B cell (primary cell): ENCODE measurements at regions of chr19 and their contacts with region 1.

Region 1: GRCh38 chr19:13748169-13748828 is 16.0 kb upstream of the MRI1 start:
- DNase-seq: no peak
- ATAC-seq: no peak
- H3K4me3 ChIP-seq: peak overlapping the region; percentile 76 to 97 (median 86)
- H3K4me3 Mint-ChIP-seq: peak overlapping the region; percentile 90
- H3K27ac ChIP-seq: peak overlapping the region; percentile 71 to 94
- H3K27ac Mint-ChIP-seq: peak overlapping the region; percentile 82
- H3K4me1 ChIP-seq: peaks cover 11 to 15% of the 10 kb centered on the region in 2 donors
- H3K4me1 Mint-ChIP-seq: peaks cover 28% of the 10 kb centered on the region
- H3K27me3 ChIP-seq: no peaks in the 10 kb centered on the region
- H3K27me3 Mint-ChIP-seq: no peaks in the 10 kb centered on the region
- CTCF ChIP-seq: no peak

Region 2: DNA sequence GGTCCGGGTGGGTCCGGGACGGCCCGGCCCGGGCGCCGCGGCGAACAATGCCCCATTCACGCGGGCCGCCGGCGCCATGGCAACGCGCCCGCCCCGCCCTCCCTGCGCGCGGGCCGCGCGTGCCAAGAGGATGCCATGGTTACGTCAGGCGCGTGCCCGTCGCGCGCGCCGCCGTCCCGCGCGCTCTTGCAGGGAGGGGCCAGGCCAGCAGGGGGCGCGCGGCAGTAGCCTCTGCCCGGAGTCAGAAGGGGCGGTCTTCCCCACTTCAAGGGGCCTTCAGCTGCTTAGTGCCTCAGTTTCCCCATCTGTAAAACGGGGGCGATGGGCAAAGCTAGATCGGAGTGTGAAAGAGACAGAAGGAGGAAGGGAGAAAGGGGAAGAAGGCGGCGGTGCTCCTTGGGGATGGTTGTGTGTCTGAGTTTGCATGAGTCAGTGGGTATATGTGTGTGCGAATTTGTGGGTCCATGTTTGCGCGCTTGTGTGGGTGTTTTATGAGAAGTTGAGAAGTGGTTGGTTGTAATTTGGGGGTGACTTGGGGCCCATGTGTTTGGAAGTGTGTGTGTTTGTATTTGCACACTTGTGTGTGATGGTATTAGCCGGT is 764.7 kb before region 1 on chr19:
- CTCF ChIA-PET with region 1: no interaction called
- POLR2A ChIA-PET with region 1: no interaction called
- intact Hi-C with region 1: loop called (anchors 5 kb)
- DNase-seq: peak; percentile 93
- ATAC-seq: peak; percentile 77
- H3K4me3 ChIP-seq: peak overlapping the region in 4 of 5 experiments; percentile 24 to 62 (median 36)
- H3K4me3 Mint-ChIP-seq: no peak overlapping the region
- H3K27ac ChIP-seq: no peak overlapping the region
- H3K27ac Mint-ChIP-seq: no peak overlapping the region
- H3K4me1 ChIP-seq: peaks cover 30 to 43% of the 10 kb centered on the region in 2 donors
- H3K4me1 Mint-ChIP-seq: peaks cover 15% of the 10 kb centered on the region
- H3K27me3 ChIP-seq: peaks cover 0 to 10% (median 2%) of the 10 kb centered on the region in 4 experiments
- H3K27me3 Mint-ChIP-seq: peaks cover 4% of the 10 kb centered on the region
- CTCF ChIP-seq: peak; percentile 91

Region 3: DNA sequence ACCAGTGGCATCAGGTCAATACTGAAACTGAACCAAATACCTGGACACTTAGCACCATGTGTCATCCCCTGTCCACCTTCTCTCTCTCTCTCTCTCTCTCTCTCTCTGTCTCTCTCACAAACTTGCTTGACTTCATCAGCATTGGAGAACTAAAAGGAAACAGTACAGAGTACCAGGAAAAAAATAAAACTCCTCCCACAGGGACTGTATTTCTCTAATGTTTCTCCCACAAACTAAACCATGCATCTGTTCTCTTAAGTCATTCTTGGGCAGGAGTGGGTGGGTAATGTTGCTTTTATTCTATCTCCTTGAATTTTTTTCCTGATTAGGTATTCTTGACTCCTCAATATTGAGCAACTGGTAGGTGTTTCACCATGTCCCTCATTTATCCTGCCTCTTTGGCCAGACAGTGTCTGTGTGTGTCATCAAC is 129.1 kb before region 1 on chr19:
- CTCF ChIA-PET with region 1: no interaction called
- POLR2A ChIA-PET with region 1: no interaction called
- intact Hi-C with region 1: no loop called
- DNase-seq: no peak
- ATAC-seq: no peak
- H3K4me3 ChIP-seq: no peak overlapping the region
- H3K4me3 Mint-ChIP-seq: no peak overlapping the region
- H3K27ac ChIP-seq: no peak overlapping the region
- H3K27ac Mint-ChIP-seq: no peak overlapping the region
- H3K4me1 ChIP-seq: no peaks in the 10 kb centered on the region
- H3K4me1 Mint-ChIP-seq: no peaks in the 10 kb centered on the region
- H3K27me3 ChIP-seq: peaks cover 0 to 21% (median 6%) of the 10 kb centered on the region in 4 experiments
- H3K27me3 Mint-ChIP-seq: peaks cover 51% of the 10 kb centered on the region
- CTCF ChIP-seq: no peak

Region 4: GRCh38 chr19:13718733-13719132 is 29.6 kb before region 1 on chr19:
- CTCF ChIA-PET with region 1: no interaction called
- POLR2A ChIA-PET with region 1: no interaction called
- intact Hi-C with region 1: no loop called
- DNase-seq: no peak
- ATAC-seq: no peak
- H3K4me3 ChIP-seq: no peak overlapping the region
- H3K4me3 Mint-ChIP-seq: no peak overlapping the region
- H3K27ac ChIP-seq: no peak overlapping the region
- H3K27ac Mint-ChIP-seq: no peak overlapping the region
- H3K4me1 ChIP-seq: no peaks in the 10 kb centered on the region
- H3K4me1 Mint-ChIP-seq: peaks cover 2% of the 10 kb centered on the region
- H3K27me3 ChIP-seq: peaks cover 0 to 5% (median 3%) of the 10 kb centered on the region in 4 experiments
- H3K27me3 Mint-ChIP-seq: peaks cover 16% of the 10 kb centered on the region
- CTCF ChIP-seq: no peak

Region 5: GRCh38 chr19:13731147-13731964 is 16.9 kb before region 1 on chr19:
- CTCF ChIA-PET with region 1: interaction called, 4 read pairs
- POLR2A ChIA-PET with region 1: interaction called, 16 read pairs
- intact Hi-C with region 1: loop called (anchors 1 kb)
- DNase-seq: peak; percentile 94
- ATAC-seq: peak; percentile 100
- H3K4me3 ChIP-seq: peak overlapping the region; percentile 51 to 80 (median 72)
- H3K4me3 Mint-ChIP-seq: peak overlapping the region; percentile 94
- H3K27ac ChIP-seq: peak overlapping the region; percentile 28 to 49
- H3K27ac Mint-ChIP-seq: peak overlapping the region; percentile 91
- H3K4me1 ChIP-seq: peaks cover 6 to 22% of the 10 kb centered on the region in 2 donors
- H3K4me1 Mint-ChIP-seq: peaks cover 19% of the 10 kb centered on the region
- H3K27me3 ChIP-seq: no peaks in the 10 kb centered on the region
- H3K27me3 Mint-ChIP-seq: no peaks in the 10 kb centered on the region
- CTCF ChIP-seq: no peak

Region 6: DNA sequence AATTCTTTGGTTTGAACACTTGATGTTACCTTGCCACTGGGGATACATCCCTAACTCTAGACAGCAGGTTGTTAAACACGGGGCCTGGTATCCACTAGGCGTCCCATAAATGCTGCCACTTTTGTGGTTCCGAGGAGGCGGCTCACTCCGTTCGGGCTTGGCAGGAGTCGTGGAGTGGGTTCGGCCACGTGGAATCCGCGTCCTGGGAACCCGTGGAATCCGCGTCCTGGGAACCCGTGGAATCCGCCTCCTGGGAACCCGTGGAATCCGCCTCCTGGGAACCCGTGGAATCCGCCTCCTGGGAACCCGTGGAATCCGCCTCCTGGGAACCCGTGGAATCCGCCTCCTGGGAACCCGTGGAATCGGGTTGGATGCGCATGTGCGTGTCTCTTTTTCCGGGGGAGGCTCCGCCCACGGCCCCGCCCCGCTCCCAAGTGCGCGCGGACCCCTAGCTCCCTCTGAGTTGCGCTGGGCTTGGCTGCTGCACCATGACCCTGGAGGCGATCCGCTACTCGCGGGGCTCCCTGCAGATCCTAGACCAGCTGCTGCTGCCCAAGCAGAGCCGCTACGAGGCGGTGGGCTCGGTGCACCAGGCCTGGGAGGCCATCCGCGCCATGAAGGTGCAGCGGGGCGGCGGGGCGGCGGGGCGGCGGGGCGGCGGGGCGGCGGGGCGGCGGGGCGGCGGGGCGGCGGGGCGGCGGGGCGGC is 16.0 kb after region 1 on chr19 and contains the start of gene MRI1:
- CTCF ChIA-PET with region 1: interaction called, 5 read pairs
- POLR2A ChIA-PET with region 1: interaction called, 4 read pairs
- intact Hi-C with region 1: loop called (anchors 1 kb)
- DNase-seq: peak; percentile 71
- ATAC-seq: peak; percentile 91
- H3K4me3 ChIP-seq: peak within 1 kb of the TSS; percentile 47 to 85 (median 60)
- H3K4me3 Mint-ChIP-seq: peak within 1 kb of the TSS; percentile 89
- H3K27ac ChIP-seq: peak within 1 kb of the TSS; percentile 43 to 66
- H3K27ac Mint-ChIP-seq: peak within 1 kb of the TSS; percentile 76
- H3K4me1 ChIP-seq: peaks cover 11 to 19% of the 10 kb centered on the region in 2 donors
- H3K4me1 Mint-ChIP-seq: peaks cover 18% of the 10 kb centered on the region
- H3K27me3 ChIP-seq: peaks cover 0 to 6% (median 0%) of the 10 kb centered on the region in 4 experiments
- H3K27me3 Mint-ChIP-seq: no peaks in the 10 kb centered on the region
- CTCF ChIP-seq: no peak
- total RNA-seq, gene MRI1: 65.0 and 75.5 TPM in 2 replicates